H1 (cell line): ENCODE measurements at regions of chr1 and their contacts with region 1.

Region 1: GRCh38 chr1:2545759-2546514 is 10.2 kb upstream of the TNFRSF14 start:
- DNase-seq: peak; percentile 78 to 91
- H3K4me3 ChIP-seq: peak overlapping the region; percentile 51 to 75 (median 63)
- H3K27ac ChIP-seq: no peak overlapping the region
- H3K4me1 ChIP-seq: peaks cover 0 to 31% (median 28%) of the 10 kb centered on the region in 4 experiments; a peak in 6 of 7 replicates
- H3K27me3 ChIP-seq: peaks cover 0 to 15% (median 8%) of the 10 kb centered on the region in 4 experiments; a peak in 4 of 7 replicates
- CTCF ChIP-seq: no peak
- EP300 ChIP-seq: no peak
- POLR2A ChIP-seq: peak in 1 of 2 experiments; percentile 78; a peak in 2 of 3 replicates
- RAD21 ChIP-seq: no peak

Region 2: GRCh38 chr1:2279210-2279639 is 266.7 kb before region 1 on chr1:
- CTCF ChIA-PET with region 1: no interaction called
- POLR2A ChIA-PET with region 1: no interaction called
- DNase-seq: peak; percentile 88 to 93
- H3K4me3 ChIP-seq: peak overlapping the region in 1 of 4 experiments; percentile 29; a peak in 1 of 8 replicates
- H3K27ac ChIP-seq: peak overlapping the region; percentile 78; the same call in 1 of the 2 replicates
- H3K4me1 ChIP-seq: peaks cover 5 to 41% (median 30%) of the 10 kb centered on the region in 4 experiments
- H3K27me3 ChIP-seq: no peaks in the 10 kb centered on the region
- CTCF ChIP-seq: no peak
- EP300 ChIP-seq: peak in 1 of 2 experiments; percentile 91; a peak in 1 of 3 replicates
- POLR2A ChIP-seq: peak in 1 of 2 experiments; percentile 46; a peak in 1 of 3 replicates
- RAD21 ChIP-seq: 0 out of 4 replicates have a peak, but pooled peaks of 1 of the 2 experiments have one; percentile 2

Region 3: DNA sequence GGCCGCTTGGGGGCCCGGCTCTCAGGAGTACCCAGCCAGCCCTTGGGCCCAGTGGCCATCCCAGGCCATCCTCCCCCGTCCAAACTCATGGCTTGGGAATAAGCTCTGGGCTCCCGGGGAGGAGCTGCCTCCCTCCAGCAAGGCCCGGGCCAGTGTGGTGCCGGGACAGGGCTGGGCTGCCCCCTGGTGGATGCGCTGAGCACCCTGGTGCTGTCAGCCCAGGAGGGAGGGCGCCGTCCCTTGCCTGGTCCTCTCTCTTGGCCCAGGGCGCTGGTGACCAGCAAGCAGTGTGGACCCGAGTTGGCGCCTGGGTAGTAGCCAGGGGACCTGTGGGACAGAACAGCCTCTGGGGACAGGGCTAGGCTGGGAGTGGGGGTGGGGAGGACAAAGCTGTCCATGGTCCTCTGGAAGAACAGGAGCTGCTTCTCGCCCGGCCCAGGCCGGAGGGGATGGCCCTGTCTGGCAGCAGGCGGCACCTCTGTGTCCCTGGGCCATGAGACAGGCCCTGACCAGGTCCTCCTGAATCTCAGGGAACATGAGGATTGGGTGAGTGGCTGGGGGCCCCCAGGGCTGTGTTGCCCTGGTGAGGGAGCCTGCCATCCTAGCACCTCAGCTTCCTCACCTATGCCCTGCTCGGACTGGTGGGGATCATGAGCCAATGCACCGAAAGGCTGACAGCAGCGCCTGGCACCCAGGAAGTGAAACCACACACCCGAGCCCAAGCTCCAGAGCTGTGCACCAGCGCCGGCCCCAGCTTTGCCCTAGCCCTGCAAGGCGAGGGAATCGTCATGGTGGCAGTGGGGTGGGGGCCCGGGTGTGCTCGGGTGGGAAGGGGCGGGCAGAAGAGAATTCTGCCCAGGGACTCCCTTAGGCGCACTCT is 164.0 kb before region 1 on chr1:
- CTCF ChIA-PET with region 1: no interaction called
- POLR2A ChIA-PET with region 1: no interaction called
- DNase-seq: peak; percentile 39 to 88
- H3K4me3 ChIP-seq: no peak overlapping the region
- H3K27ac ChIP-seq: no peak overlapping the region
- H3K4me1 ChIP-seq: peaks cover 0 to 2% (median under 1%) of the 10 kb centered on the region in 4 experiments; a peak in 3 of 7 replicates
- H3K27me3 ChIP-seq: no peaks in the 10 kb centered on the region
- CTCF ChIP-seq: peak in 2 of 3 experiments; percentile 93 to 96; a peak in 3 of 4 replicates
- EP300 ChIP-seq: no peak
- POLR2A ChIP-seq: no peak
- RAD21 ChIP-seq: peak; percentile 95 to 98

Region 4: GRCh38 chr1:2406451-2407041 is 139.4 kb before region 1 on chr1:
- CTCF ChIA-PET with region 1: interaction called, 10 read pairs
- POLR2A ChIA-PET with region 1: interaction called, 3 read pairs
- DNase-seq: no peak
- H3K4me3 ChIP-seq: no peak overlapping the region
- H3K27ac ChIP-seq: no peak overlapping the region
- H3K4me1 ChIP-seq: peaks cover 0 to 1% (median under 1%) of the 10 kb centered on the region in 4 experiments; a peak in 2 of 7 replicates
- H3K27me3 ChIP-seq: no peaks in the 10 kb centered on the region
- CTCF ChIP-seq: peak in 2 of 3 experiments; percentile 37 to 52; a peak in 3 of 4 replicates
- EP300 ChIP-seq: no peak
- POLR2A ChIP-seq: no peak; a peak in 1 of 3 replicates
- RAD21 ChIP-seq: peak; percentile 8 to 27; a peak in 2 of 4 replicates

Region 5: GRCh38 chr1:2412519-2413233 is 133.3 kb before region 1 on chr1 and contains the start of gene PEX10:
- CTCF ChIA-PET with region 1: interaction called, 12 read pairs
- POLR2A ChIA-PET with region 1: interaction called, 3 read pairs
- DNase-seq: peak; percentile 81 to 99
- H3K4me3 ChIP-seq: peak within 1 kb of the TSS; percentile 60 to 92 (median 88)
- H3K27ac ChIP-seq: peak within 1 kb of the TSS; percentile 63; the same call in 1 of the 2 replicates
- H3K4me1 ChIP-seq: peaks cover 0 to 14% (median 11%) of the 10 kb centered on the region in 4 experiments; a peak in 5 of 7 replicates
- H3K27me3 ChIP-seq: no peaks in the 10 kb centered on the region
- CTCF ChIP-seq: no peak
- EP300 ChIP-seq: no peak
- POLR2A ChIP-seq: no peak; a peak in 2 of 3 replicates
- RAD21 ChIP-seq: no peak
- total RNA-seq, gene PEX10: 24.3 and 24.7 TPM in 2 replicates

Region 6: GRCh38 chr1:2436876-2437275 is 109.1 kb before region 1 on chr1:
- CTCF ChIA-PET with region 1: no interaction called
- POLR2A ChIA-PET with region 1: no interaction called
- DNase-seq: no peak
- H3K4me3 ChIP-seq: no peak overlapping the region
- H3K27ac ChIP-seq: no peak overlapping the region
- H3K4me1 ChIP-seq: no peaks in the 10 kb centered on the region
- H3K27me3 ChIP-seq: peaks cover 0 to 4% (median 2%) of the 10 kb centered on the region in 4 experiments; a peak in 5 of 7 replicates
- CTCF ChIP-seq: no peak
- EP300 ChIP-seq: no peak
- POLR2A ChIP-seq: no peak
- RAD21 ChIP-seq: no peak

Region 7: DNA sequence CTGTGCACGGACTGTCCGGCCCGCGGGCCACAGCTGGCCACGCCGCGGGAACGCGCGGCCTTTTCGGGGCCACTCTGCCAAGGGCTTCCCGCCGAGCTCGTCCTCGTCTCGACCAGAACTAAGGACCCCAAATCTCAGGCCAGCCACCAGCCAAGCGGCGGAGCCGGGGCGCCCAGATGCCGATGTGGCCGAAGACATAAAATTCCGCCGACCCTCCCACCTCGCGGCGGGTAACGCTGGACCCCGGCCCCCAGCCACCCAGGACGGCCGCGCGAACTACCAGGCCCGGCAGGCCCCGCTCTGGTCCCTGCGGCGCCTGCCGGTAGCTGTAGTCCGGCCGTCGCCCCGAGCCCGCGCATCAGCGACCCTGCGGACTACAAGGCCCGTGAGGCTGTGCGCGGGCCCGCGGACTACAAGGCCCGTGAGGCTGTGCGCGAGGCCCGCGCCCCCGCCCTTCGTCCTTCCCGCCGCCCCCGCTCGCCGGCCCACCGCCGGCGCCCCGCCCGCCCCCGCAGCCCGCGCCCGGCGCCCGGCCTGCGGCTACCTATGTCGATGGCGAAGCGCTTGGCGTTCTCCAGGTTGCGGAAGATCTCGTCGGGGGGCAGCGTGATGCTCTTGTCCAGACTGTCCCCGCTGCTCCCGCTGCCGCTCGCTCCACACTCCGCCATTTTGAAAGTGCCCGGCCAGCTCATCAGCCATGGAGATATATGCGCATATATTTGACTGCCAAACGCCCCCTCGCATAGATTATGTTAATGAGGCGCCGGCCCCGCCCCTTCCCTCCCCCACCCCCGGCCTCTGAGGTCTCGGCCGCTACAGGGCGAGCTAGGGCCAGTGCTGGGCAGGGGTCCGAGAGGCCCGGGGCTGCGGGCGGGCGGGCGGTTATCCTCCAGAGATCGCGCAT is 19.8 kb before region 1 on chr1 and contains the start of gene PANK4:
- CTCF ChIA-PET with region 1: interaction called, 27 read pairs
- POLR2A ChIA-PET with region 1: interaction called, 8 read pairs
- DNase-seq: peak; percentile 66 to 88
- H3K4me3 ChIP-seq: peak within 1 kb of the TSS; percentile 51 to 94 (median 90)
- H3K27ac ChIP-seq: peak within 1 kb of the TSS; percentile 60; the same call in 1 of the 2 replicates
- H3K4me1 ChIP-seq: peaks cover 0 to 40% (median 21%) of the 10 kb centered on the region in 4 experiments; a peak in 6 of 7 replicates
- H3K27me3 ChIP-seq: peaks cover 22 to 45% (median 42%) of the 10 kb centered on the region in 4 experiments
- CTCF ChIP-seq: no peak
- EP300 ChIP-seq: no peak
- POLR2A ChIP-seq: peak in 1 of 2 experiments; percentile 88; a peak in 2 of 3 replicates
- RAD21 ChIP-seq: no peak; a peak in 1 of 4 replicates
- total RNA-seq, gene PANK4: 29.7 and 35.4 TPM in 2 replicates

Region 8: DNA sequence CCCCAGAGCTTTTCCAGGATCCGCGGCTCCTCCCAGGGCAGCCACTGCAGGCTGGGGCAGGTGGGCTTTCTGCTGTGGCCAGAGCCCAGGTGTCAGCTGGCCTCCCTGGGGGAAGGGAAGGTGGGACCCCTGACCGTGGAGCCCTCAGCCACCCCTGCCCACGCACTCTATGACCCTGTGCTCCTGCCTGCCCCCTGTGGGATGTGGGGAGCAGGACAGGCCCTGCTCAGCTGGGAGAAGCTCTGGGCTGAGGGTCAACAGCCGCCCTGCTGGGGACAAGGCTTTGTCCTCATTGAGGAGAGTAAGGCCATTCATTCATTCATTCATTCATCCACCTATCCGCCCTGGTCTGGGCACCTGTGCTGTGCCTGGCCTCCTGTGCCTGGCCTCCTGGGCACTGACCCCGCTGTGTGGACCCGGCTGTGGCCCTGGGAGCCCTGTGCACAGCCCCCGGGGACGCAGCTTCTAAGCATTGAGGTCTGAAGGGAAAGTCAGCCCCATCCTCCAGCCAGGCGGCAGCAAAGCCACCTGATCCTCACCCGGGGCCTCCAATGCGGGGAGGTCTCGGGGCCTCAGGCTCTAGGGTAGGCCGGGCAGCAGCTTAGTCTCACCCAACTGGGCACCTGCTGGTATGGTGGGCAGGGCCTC is 16.1 kb after region 1 on chr1:
- CTCF ChIA-PET with region 1: interaction called, 17 read pairs
- POLR2A ChIA-PET with region 1: interaction called, 3 read pairs
- DNase-seq: no peak
- H3K4me3 ChIP-seq: no peak overlapping the region
- H3K27ac ChIP-seq: no peak overlapping the region
- H3K4me1 ChIP-seq: peaks cover 0 to 5% (median 0%) of the 10 kb centered on the region in 4 experiments; a peak in 1 of 7 replicates
- H3K27me3 ChIP-seq: no peaks in the 10 kb centered on the region
- CTCF ChIP-seq: peak in 2 of 3 experiments; percentile 61 to 69; a peak in 3 of 4 replicates
- EP300 ChIP-seq: no peak
- POLR2A ChIP-seq: no peak
- RAD21 ChIP-seq: peak; percentile 25 to 56; a peak in 3 of 4 replicates

Region 9: GRCh38 chr1:2628191-2628932 is 82.4 kb after region 1 on chr1:
- CTCF ChIA-PET with region 1: no interaction called
- POLR2A ChIA-PET with region 1: no interaction called
- DNase-seq: no peak
- H3K4me3 ChIP-seq: peak overlapping the region; percentile 34 to 64 (median 34)
- H3K27ac ChIP-seq: no peak overlapping the region
- H3K4me1 ChIP-seq: peaks cover 0 to 23% (median 15%) of the 10 kb centered on the region in 4 experiments; a peak in 6 of 7 replicates
- H3K27me3 ChIP-seq: peaks cover 22 to 52% (median 36%) of the 10 kb centered on the region in 4 experiments
- CTCF ChIP-seq: no peak
- EP300 ChIP-seq: peak in 1 of 2 experiments; percentile 88; a peak in 1 of 3 replicates
- POLR2A ChIP-seq: no peak
- RAD21 ChIP-seq: no peak